ENCODE measurements at regions of chr18 and their contacts with region 1.

Region 1: GRCh38 chr18:48781163-48781987 is 169.4 kb downstream of the SMAD7 start:
- DNase-seq: peak; percentile 93
- H3K4me3 ChIP-seq: peak overlapping the region; percentile 24 to 32 (median 28)
- H3K27ac ChIP-seq: peak overlapping the region; percentile 78 to 82 (median 80)
- H3K4me1 ChIP-seq: peaks cover 60 to 79% (median 73%) of the 10 kb centered on the region in 4 donors
- H3K27me3 ChIP-seq: no peaks in the 10 kb centered on the region
- CTCF ChIP-seq: no peak
- EP300 ChIP-seq: no peak
- POLR2A ChIP-seq: no peak

Region 2: GRCh38 chr18:48711651-48712486 is 69.5 kb before region 1 on chr18:
- intact Hi-C with region 1: no loop called
- DNase-seq: no peak
- H3K4me3 ChIP-seq: no peak overlapping the region
- H3K27ac ChIP-seq: no peak overlapping the region
- H3K4me1 ChIP-seq: peaks cover 32 to 42% (median 38%) of the 10 kb centered on the region in 4 donors
- H3K27me3 ChIP-seq: no peaks in the 10 kb centered on the region
- CTCF ChIP-seq: peak; percentile 31 to 44 (median 40)
- EP300 ChIP-seq: no peak
- POLR2A ChIP-seq: no peak

Region 3: GRCh38 chr18:48827291-48828193 is 46.2 kb after region 1 on chr18:
- intact Hi-C with region 1: loop called (anchors 5 kb)
- DNase-seq: no peak
- H3K4me3 ChIP-seq: peak overlapping the region; percentile 2 to 19 (median 16)
- H3K27ac ChIP-seq: peak overlapping the region; percentile 38 to 70 (median 50)
- H3K4me1 ChIP-seq: peaks cover 47 to 63% (median 55%) of the 10 kb centered on the region in 4 donors
- H3K27me3 ChIP-seq: no peaks in the 10 kb centered on the region
- CTCF ChIP-seq: no peak
- EP300 ChIP-seq: no peak
- POLR2A ChIP-seq: no peak